ENCODE measurements at regions of chr13 and their contacts with region 1.

Region 1: GRCh38 chr13:80132741-80133601 is 208.0 kb downstream of the SPRY2 start:
- DNase-seq: peak; percentile 41 to 92 (median 66)

Region 2: GRCh38 chr13:79936368-79937136 is 196.4 kb before region 1 on chr13:
- intact Hi-C with region 1: loop called (anchors 5 kb)
- DNase-seq: peak in 8 of 10 donors; percentile 21 to 82 (median 52)

Region 3: GRCh38 chr13:80030491-80030890 is 102.5 kb before region 1 on chr13:
- intact Hi-C with region 1: no loop called
- DNase-seq: peak in 1 of 10 donors; percentile 23

Region 4: DNA sequence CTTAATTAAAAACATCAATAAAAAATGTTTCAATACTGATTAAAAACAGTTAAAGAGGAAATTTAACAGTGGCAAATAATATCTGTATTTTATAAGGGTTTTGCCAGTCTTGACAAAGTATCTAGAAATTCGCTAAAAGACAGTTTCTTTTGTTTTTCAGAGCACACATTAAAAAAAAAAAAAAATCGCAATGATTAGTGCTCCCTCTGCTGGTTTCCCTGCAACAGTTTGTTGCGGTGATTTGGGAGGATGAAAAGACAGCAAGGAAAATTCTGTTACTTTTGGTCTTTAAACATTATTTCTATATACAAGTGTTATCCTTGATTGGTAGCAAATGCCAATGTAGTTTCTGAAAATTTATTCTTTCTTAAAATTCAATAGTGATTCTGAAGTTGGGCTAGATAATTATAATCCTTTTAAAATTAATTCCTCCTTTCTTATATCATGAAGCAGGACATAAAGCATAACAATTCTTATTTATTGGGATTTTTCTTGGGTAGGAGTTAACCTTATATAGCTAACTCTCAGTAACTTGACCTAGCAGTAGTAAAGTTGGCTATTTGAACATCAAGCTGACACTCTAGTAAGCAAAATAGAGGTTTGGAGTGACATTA is 231.0 kb after region 1 on chr13:
- intact Hi-C with region 1: no loop called
- DNase-seq: no peak

Region 5: DNA sequence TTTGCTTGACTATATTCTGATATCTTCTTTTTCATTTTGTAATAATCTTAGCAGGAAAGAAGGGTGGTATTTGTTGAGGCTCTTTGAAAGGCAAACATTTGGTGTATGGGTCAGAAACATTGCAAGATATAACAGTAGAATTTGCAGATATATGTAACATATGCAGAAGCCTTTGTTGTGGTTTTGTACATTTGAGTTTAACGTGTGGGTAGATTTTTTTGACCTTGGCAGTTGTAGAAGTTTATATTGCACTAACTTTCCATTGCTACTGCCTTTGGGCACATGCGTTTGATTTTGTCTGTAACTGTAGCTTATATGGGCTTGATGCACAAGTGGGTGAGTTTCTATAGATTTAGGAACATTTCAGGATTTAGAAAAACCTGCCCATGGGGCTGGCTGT is 286.4 kb after region 1 on chr13:
- intact Hi-C with region 1: no loop called
- DNase-seq: no peak